CD14-positive monocyte (primary cell): ENCODE measurements at regions of chr2 and their contacts with region 1.

Region 1: DNA sequence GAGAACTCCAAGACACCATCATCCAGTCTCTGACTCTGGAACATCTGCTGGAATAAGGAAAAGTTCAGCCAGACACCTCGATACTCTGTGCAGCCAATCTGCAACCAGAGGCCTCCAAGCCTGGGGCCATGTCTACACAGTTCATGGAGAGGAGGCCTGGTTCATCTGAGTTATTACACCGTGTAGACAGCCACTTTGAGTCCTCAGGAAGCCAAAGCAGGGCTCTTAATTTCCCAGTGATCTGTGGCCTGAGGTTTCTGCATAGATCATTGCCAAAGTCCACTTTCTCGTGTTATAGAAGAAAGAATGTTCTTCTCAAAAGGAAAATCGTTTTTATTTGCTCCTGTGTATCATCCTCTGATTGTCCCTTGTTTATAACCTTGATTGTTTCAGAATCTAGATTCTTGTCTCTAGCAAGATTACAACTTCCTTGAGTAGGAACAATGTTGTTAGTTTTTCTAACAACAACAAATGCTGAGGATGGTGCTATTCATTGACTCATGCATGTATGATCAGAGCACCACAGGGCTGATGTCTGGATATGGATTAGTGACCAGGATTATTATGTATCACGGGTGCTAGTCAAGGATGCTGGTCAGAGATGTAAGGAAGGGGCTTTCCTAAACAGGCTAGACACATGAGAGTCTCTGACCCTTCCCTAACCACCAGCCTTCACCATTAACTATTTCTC is 30.7 kb upstream of the MARCO start:
- DNase-seq: peak in 1 of 3 donors; percentile 17
- H3K4me3 ChIP-seq: no peak overlapping the region
- H3K4me3 Mint-ChIP-seq: no peak overlapping the region
- H3K27ac ChIP-seq: no peak overlapping the region
- H3K27ac Mint-ChIP-seq: peak overlapping the region in 1 of 7 donors; percentile 0
- H3K4me1 ChIP-seq: peaks cover 20 to 33% of the 10 kb centered on the region in 2 donors
- H3K4me1 Mint-ChIP-seq: peaks cover 37% of the 10 kb centered on the region
- H3K27me3 ChIP-seq: no peaks in the 10 kb centered on the region
- H3K27me3 Mint-ChIP-seq: peaks cover 0 to 11% (median 3%) of the 10 kb centered on the region in 3 donors
- CTCF ChIP-seq: no peak

Region 2: DNA sequence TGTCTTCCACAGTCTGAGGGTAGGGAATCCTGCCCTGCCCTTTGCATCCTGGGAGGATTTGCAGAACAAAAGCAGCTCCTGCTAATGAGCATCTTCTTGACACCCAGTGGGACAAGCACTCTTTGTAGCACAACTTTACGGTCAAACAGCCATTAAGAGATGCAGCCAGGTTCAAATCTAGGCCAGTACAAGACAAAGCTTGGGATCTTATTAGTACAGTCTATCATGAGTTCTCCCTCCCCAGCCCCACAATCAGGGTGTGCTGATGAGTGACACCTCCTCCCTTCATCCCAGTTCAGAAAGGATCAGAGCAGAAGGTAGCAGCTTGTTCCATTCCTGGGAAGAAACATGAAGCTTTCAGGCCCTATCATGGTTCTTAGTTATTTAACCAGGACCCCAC is 72.6 kb after region 1 on chr2:
- intact Hi-C with region 1: loop called in 1 of 2 experiments (anchors 2 kb)
- DNase-seq: no peak
- H3K4me3 ChIP-seq: no peak overlapping the region
- H3K4me3 Mint-ChIP-seq: no peak overlapping the region
- H3K27ac ChIP-seq: no peak overlapping the region
- H3K27ac Mint-ChIP-seq: no peak overlapping the region
- H3K4me1 ChIP-seq: peaks cover 39 to 45% of the 10 kb centered on the region in 2 donors
- H3K4me1 Mint-ChIP-seq: peaks cover 64% of the 10 kb centered on the region
- H3K27me3 ChIP-seq: no peaks in the 10 kb centered on the region
- H3K27me3 Mint-ChIP-seq: peaks cover 12 to 23% (median 15%) of the 10 kb centered on the region in 3 donors
- CTCF ChIP-seq: no peak